Heart left ventricle (tissue), 16 donors: ENCODE measurements at regions of chr1 and their contacts with region 1.

Region 1: GRCh38 chr1:162285149-162285561 is 91.5 kb downstream of the SPATA46 start:
- DNase-seq: peak in 4 of 5 donors; percentile 25 to 68 (median 53)
- ATAC-seq: peak; percentile 74 to 91 (median 86)
- H3K4me3 ChIP-seq: no peak overlapping the region
- H3K27ac ChIP-seq: peak overlapping the region in 9 of 12 donors; percentile 2 to 70 (median 63)
- H3K4me1 ChIP-seq: peaks cover 0 to 35% (median 11%) of the 10 kb centered on the region in 12 donors
- H3K27me3 ChIP-seq: peaks cover 0 to 2% (median 0%) of the 10 kb centered on the region in 9 donors
- CTCF ChIP-seq: no peak
- POLR2A ChIP-seq: no peak

Region 2: DNA sequence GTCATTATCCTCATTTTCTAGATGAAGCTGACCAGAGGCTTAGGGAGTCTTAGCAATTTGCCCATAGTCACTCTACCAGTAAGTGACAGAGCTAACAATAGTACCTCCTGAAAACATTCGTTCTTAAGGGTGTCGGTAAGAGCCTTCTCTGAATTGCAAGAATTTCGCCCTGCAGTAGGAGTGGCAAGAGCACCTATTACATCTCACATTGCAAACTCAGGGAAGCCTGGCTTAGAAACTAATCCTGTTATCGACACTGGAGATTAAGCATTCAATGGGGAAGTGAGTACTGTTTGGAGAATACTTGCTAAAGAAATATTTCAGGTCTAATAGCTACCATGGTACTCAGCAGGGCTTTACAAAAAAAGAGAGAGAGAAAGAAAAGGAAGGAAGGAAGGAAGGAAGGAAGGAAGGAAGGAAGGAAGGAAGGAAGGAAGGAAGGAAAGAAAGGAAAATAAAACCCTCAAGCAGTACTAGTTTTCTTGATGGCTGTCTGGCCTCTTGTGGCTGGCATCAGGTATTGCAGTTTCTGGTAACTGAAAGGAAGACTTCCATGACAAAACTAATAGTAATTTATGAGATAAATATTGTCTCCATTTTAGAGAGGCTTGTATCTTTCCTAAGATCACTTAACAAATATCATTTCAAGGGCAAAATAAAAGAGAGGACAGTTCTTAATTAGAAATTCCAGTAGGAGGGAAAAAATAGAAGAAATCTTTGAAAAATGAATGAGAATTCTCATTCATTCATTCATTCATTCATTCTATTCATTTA is 106.8 kb after region 1 on chr1:
- intact Hi-C with region 1: loop called in 2 of 10 experiments (anchors 5 to 10 kb)
- DNase-seq: no peak
- ATAC-seq: peak in 1 of 4 donors; percentile 60
- H3K4me3 ChIP-seq: no peak overlapping the region
- H3K27ac ChIP-seq: no peak overlapping the region
- H3K4me1 ChIP-seq: peaks cover 0 to 4% (median 0%) of the 10 kb centered on the region in 12 donors
- H3K27me3 ChIP-seq: peaks cover 0 to 21% (median 0%) of the 10 kb centered on the region in 9 donors
- CTCF ChIP-seq: peak; percentile 67 to 87 (median 78)
- POLR2A ChIP-seq: no peak

Region 3: DNA sequence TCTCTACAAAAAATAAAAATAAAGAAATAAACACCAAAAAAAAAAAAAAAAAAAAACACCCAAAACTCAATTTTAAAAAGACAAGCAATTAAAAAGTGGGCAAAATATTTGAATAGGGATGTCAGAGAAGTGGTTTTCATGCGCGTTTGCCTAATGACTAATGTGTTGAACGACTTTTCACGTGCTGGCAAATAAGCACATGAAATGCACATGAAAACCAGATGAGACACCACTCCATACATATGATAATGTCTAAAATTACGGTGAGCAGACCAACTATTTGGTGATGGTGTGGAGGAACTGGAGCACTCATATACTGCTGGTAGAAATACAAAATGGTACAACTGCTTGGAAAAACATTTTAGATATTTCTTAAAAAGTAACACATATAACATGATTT is 173.1 kb after region 1 on chr1:
- intact Hi-C with region 1: no loop called
- DNase-seq: no peak
- ATAC-seq: no peak
- H3K4me3 ChIP-seq: no peak overlapping the region
- H3K27ac ChIP-seq: no peak overlapping the region
- H3K4me1 ChIP-seq: no peaks in the 10 kb centered on the region
- H3K27me3 ChIP-seq: peaks cover 0 to 5% (median 0%) of the 10 kb centered on the region in 9 donors
- CTCF ChIP-seq: no peak
- POLR2A ChIP-seq: no peak